PC-3 (cell line): ENCODE measurements at regions of chr3 and their contacts with region 1.

Region 1: GRCh38 chr3:143283432-143284128 is 164.0 kb downstream of the CHST2 start:
- DNase-seq: peak; percentile 89
- ATAC-seq: peak; percentile 91
- H3K4me3 ChIP-seq: no peak overlapping the region
- H3K27ac ChIP-seq: peak overlapping the region; percentile 67
- H3K4me1 ChIP-seq: peaks cover 16% of the 10 kb centered on the region
- H3K27me3 ChIP-seq: no peaks in the 10 kb centered on the region
- CTCF ChIP-seq: no peak

Region 2: GRCh38 chr3:143135150-143135549 is 148.4 kb before region 1 on chr3:
- CTCF ChIA-PET with region 1: no interaction called
- POLR2A ChIA-PET with region 1: no interaction called
- intact Hi-C with region 1: loop called (anchors 5 kb)
- DNase-seq: peak; percentile 87
- ATAC-seq: peak; percentile 90
- H3K4me3 ChIP-seq: no peak overlapping the region
- H3K27ac ChIP-seq: peak overlapping the region; percentile 36
- H3K4me1 ChIP-seq: peaks cover 27% of the 10 kb centered on the region
- H3K27me3 ChIP-seq: no peaks in the 10 kb centered on the region
- CTCF ChIP-seq: 0 out of 2 replicates have a peak, but pooled peaks have one; percentile 14